ENCODE measurements at regions of chr1 and their contacts with region 1.

Region 1: GRCh38 chr1:93615582-93616150 is 66.0 kb downstream of the BCAR3 start:
- DNase-seq: peak; percentile 60
- H3K4me3 ChIP-seq: no peak overlapping the region
- H3K27ac ChIP-seq: peak overlapping the region; percentile 73
- H3K4me1 ChIP-seq: peaks cover 86% of the 10 kb centered on the region
- H3K27me3 ChIP-seq: no peaks in the 10 kb centered on the region
- CTCF ChIP-seq: no peak

Region 2: GRCh38 chr1:93579891-93580290 is 35.8 kb before region 1 on chr1:
- CTCF ChIA-PET with region 1: no interaction called
- dilution Hi-C with region 1: loop called (anchors 5 kb)
- in situ Hi-C with region 1: no loop called
- intact Hi-C with region 1: no loop called
- DNase-seq: peak; percentile 87
- H3K4me3 ChIP-seq: no peak overlapping the region
- H3K27ac ChIP-seq: peak overlapping the region; percentile 56
- H3K4me1 ChIP-seq: peaks cover 78% of the 10 kb centered on the region
- H3K27me3 ChIP-seq: no peaks in the 10 kb centered on the region
- CTCF ChIP-seq: no peak

Region 3: DNA sequence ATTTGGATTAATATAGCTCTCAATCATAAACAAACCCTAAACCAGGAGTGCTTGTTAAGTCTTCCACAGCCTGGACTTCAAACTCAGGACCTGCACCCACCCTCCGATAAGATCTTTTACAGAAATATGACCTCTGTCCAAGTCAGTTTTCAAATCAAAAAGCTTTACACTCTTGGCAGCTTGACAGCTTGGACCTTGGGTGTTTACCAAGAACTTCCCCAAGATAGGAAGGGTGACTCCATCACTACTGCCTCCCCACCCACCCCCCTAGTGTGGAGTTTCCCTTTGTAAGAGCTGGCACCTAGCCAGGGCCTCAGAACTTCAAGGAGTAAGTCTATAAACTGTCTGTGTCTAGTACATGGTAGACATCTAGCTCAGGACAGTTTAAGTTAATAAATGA is 56.4 kb after region 1 on chr1:
- CTCF ChIA-PET with region 1: no interaction called
- dilution Hi-C with region 1: loop called (anchors 5 kb)
- in situ Hi-C with region 1: no loop called
- intact Hi-C with region 1: no loop called
- DNase-seq: peak; percentile 42
- H3K4me3 ChIP-seq: no peak overlapping the region
- H3K27ac ChIP-seq: no peak overlapping the region
- H3K4me1 ChIP-seq: peaks cover 70% of the 10 kb centered on the region
- H3K27me3 ChIP-seq: no peaks in the 10 kb centered on the region
- CTCF ChIP-seq: no peak